ENCODE measurements at regions of chr11 and their contacts with region 1.

Region 1: DNA sequence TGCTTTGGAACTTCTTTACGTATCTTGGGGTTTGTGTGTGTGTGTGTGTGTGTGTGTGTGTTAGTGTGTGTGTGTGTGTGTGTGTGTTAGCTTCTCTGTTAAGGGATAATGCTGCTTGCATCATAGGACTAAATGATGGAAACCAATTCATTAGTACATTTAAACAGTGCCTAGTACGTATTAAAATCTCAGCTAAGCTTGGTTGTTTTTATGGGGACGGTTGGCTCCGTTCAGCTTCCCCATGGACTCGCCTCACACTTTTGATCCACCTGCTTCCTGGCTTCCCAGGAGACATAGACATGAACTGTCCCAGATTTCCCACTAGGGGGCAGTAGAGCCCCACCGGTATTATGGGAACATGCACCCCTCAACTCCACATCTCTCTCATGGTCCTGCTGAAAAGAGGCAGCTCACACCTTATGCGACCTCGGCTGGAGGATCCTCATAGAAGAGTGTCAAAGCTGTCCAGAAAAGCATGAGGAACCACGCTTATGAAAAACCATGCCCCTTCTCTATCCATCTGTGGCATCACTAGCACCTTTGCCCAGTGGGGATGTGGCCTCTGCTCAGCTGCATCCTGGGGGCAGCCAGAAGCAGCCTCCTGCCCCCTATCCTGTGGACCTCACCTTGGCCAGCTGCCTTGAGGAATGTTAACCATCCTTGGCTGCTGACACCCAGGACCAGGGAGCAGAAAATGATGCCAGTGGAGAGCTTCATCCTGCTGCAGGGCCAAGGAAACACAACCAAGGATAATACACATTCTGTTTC is 9.7 kb upstream of the SAAL1 start:
- DNase-seq: peak; percentile 43
- ATAC-seq: peak; percentile 79 to 87

Region 2: DNA sequence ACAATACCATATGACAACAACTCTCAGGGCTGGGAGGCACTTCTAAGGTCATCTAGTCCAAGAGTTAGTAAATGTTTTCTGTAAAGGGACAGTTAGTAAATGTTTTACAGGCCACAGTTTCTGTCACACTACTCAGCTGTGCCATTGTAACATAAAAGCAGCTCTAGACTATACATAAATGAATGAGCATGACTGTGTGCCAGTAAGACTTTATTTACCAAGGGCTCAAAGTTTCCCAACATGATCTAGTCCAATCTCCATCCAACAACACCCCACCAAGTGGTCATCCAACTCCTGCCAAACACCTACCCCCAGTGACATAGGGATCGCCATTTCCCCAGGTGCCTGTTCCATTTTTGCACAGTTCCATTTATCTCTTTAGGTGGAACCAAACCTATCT is 114.8 kb before region 1 on chr11:
- intact Hi-C with region 1: no loop called
- DNase-seq: no peak
- ATAC-seq: no peak

Region 3: DNA sequence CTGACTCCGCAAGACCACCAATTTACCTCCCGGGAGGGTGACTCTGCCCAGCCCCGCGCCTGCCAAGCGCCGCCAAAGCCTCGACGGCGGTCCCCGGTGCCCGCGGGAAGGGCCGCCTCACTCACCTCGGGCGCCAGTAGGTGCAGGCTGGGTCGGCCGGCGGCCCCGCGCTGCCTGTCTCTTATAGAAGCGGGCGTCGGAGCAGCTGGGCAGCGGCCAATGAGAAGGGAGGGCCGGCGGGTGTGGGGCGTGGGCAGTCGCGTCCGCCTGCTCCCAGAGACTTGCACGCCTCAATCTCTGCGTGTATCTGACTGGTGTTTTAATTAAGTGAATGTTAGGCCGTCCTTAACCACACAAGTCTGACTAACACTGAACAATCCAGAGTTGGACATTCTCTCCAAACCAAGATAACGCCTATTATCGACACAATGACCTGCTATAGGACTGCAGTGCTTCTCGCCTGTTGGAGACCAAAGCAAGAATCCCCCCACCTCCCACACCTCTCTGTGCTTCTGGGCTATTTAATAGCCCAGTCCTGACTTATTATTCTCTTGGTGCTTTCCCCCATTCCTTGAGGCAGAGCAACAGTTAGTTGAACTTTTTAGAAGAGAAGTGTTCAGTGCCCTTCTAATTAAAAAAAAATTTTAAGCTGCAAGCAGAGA is 69.3 kb before region 1 on chr11 and contains the start of gene TPH1:
- intact Hi-C with region 1: no loop called
- DNase-seq: peak; percentile 69
- ATAC-seq: peak; percentile 50 to 98
- total RNA-seq, gene TPH1: 0.03 to 0.18 TPM

Region 4: GRCh38 chr11:18091731-18092130 is 23.8 kb before region 1 on chr11:
- intact Hi-C with region 1: no loop called
- DNase-seq: no peak
- ATAC-seq: no peak

Region 5: GRCh38 chr11:18427240-18427639 is 311.7 kb after region 1 on chr11:
- intact Hi-C with region 1: no loop called
- DNase-seq: no peak
- ATAC-seq: no peak

Region 6: DNA sequence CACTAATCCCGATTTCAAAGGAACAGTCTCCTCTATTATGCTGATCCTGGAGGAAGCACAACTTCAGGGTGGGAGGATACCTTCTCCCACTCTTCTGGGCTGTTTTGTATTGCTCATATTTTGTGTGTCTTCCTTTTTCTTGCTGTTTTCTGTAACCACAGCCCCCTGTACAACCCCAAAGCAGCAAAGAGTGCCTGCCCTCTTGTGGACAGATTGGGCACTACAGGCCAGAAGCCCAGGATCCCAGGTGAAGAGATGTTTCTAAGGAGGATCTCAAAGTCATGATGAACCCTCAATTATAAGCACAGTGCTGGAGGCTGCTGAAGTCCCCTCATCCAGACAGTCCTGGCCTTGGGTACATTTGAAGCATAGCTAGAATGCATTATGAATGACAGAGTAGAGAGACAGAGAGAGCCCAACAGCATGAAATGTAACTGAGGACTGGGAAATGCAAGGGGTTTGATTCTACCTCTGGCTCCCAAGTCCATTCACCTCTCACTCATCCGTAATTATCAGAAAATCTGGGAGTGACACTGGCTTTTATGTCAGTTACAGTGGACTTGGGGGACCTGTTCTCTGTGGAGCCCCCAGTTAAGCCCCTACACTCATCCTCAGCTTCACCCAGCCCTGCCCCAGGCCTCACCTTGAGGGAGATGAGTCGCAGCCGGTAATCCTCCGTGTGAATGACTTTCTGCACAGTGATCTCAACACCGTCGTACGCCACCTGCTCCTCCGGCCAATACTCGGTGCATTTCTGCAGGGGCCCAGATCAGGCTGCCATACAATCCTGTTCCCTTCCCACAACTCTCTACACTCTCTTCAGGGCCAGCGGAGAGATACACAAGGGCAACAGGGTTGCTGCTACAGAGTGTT is 616.6 kb after region 1 on chr11:
- intact Hi-C with region 1: loop called in 1 of 2 experiments (anchors 10 kb)
- DNase-seq: peak; percentile 43
- ATAC-seq: peak; percentile 43 to 76